Prostate gland (tissue), 2 donors: ENCODE measurements at regions of chr13 and their contacts with region 1.

Region 1: DNA sequence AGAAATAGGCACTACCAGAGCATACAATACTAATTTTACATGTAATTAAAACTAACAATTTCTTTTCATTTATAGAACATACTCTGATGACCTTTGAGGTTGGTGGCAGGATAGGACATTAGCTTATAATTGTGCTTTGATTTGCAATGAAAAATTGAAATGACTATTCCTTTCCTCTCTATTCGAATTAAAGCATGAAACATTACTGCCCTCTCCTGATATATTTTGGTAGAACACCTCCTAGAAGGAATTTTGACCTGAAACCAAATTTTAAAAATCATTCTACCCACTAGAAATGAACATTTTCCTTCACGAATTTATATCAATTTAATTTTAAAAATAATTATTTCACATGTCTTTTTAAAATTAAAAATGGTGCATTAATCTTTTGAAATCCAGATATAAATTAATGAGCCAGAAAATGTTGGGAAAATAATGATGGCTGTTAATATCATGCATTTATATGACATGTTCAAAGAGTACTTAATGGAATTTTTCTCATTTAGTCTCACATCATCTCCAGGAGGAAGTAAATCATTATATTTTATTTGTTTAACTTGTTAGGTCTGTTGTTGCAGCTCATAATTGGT is 556.3 kb upstream of the ARGLU1 start:
- DNase-seq: no peak
- H3K4me3 ChIP-seq: no peak overlapping the region
- H3K27ac ChIP-seq: no peak overlapping the region
- H3K4me1 ChIP-seq: no peaks in the 10 kb centered on the region
- H3K27me3 ChIP-seq: no peaks in the 10 kb centered on the region
- CTCF ChIP-seq: peak in 3 of 4 experiments; percentile 9 to 63 (median 47)
- POLR2A ChIP-seq: no peak

Region 2: DNA sequence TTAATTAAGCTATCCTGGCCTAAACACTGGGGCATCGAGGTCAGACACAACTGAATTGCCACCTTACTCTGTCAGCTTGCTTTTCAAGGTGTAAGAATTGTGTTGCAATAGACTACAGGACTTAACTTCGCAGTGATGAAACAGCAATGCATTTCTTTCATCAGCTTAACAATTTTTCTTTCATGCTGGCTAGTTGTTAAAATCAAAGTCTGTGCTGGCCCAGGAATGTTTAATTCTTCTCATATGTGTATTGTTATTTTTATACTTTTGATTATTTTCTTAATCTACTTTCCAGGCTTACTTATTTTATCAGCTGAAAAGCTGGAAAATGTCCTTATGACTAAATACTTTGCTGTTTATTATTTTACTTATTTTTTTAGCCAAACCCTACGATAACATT is 668.4 kb before region 1 on chr13:
- intact Hi-C with region 1: no loop called
- DNase-seq: no peak
- H3K4me3 ChIP-seq: no peak overlapping the region
- H3K27ac ChIP-seq: no peak overlapping the region
- H3K4me1 ChIP-seq: no peaks in the 10 kb centered on the region
- H3K27me3 ChIP-seq: no peaks in the 10 kb centered on the region
- CTCF ChIP-seq: no peak
- POLR2A ChIP-seq: no peak

Region 3: DNA sequence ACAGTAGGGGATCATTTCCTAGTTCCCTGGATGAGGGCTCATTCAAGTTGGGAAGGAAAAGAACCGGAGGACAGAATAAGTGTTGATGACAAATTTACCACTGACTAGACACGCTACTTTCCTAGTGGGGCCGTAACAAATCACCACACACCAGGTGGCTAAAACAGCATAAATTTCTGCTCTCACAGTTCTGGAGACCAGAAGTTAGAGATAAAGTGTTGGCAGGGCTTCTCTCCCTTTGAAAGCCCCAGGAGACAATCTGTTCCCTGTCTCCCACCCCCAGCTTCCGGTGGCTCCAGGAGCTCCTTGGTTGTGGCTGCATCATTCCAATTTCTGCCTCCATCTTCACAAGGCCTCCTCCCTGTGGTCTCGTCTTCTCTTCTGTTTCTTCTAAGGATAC is 490.9 kb before region 1 on chr13:
- intact Hi-C with region 1: loop called (anchors 10 kb)
- DNase-seq: no peak
- H3K4me3 ChIP-seq: no peak overlapping the region
- H3K27ac ChIP-seq: no peak overlapping the region
- H3K4me1 ChIP-seq: no peaks in the 10 kb centered on the region
- H3K27me3 ChIP-seq: no peaks in the 10 kb centered on the region
- CTCF ChIP-seq: no peak
- POLR2A ChIP-seq: no peak

Region 4: GRCh38 chr13:106796280-106797047 is 327.8 kb before region 1 on chr13:
- intact Hi-C with region 1: no loop called
- DNase-seq: no peak
- H3K4me3 ChIP-seq: no peak overlapping the region
- H3K27ac ChIP-seq: no peak overlapping the region
- H3K4me1 ChIP-seq: no peaks in the 10 kb centered on the region
- H3K27me3 ChIP-seq: no peaks in the 10 kb centered on the region
- CTCF ChIP-seq: no peak
- POLR2A ChIP-seq: no peak

Region 5: DNA sequence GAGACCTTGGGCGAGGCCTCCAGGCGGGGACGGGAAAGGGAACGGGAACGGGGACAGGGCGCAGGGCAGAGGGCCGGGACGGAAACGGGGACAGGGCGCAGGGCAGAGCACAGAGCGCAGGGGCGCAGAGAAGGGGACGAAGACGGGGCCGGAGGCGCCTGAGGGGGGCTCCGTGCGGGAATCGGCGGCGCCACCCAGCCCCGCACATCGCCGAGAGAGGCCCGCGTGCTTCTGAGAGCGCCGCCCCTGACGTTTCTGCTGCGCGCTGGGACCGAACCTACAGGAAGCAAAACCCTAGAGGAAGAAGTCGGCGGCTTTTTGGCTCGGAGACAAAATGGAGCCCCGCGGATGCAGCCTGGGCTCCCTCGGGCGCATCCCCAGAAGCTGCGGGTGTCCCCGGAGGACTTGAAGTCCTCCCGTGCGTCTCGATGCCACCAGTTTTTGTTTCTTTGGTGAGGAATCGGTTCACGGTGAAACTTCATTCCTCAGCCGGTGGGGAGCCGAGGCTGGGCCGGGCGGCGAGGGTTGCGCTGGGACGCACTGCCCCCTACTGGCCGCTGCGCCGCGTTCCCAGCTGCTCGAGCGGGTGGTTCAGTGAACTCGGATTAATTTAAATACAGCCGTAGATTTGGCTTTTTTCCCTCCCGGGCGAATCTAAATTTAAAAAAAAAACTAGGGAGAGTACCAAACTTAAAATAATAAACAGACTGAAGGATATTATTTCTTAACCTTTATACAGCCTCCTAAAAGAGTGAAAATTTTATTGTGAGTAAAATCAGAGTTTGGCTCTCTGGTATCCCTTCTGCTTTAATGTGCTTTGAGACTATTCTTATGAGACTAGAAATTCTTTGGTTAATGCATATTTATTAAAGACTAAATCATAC is 206.3 kb before region 1 on chr13:
- intact Hi-C with region 1: loop called (anchors 10 kb)
- DNase-seq: peak; percentile 59
- H3K4me3 ChIP-seq: peak overlapping the region; percentile 42
- H3K27ac ChIP-seq: peak overlapping the region; percentile 60 to 74
- H3K4me1 ChIP-seq: no peaks in the 10 kb centered on the region
- H3K27me3 ChIP-seq: no peaks in the 10 kb centered on the region
- CTCF ChIP-seq: peak; percentile 77 to 89 (median 87)
- POLR2A ChIP-seq: no peak

Region 6: DNA sequence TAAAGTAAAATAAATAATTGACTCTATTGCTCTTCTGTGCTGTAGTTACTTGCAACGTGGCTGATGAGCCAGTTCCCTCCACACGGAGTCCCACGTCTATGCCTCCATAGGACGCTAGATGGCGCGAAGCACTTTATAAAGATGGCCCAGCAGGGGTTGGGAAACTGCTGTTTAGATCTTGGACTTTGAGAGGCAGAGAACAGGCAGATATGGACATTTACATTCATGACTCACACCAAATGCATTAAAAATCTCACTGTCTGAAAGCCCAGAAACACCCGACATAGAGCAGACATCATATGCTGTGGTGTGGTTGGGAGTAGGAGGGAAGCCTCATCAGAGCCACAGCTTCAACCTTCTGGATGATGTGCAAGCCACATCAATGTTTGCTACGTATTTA is 86.8 kb after region 1 on chr13:
- intact Hi-C with region 1: no loop called
- DNase-seq: peak; percentile 49
- H3K4me3 ChIP-seq: no peak overlapping the region
- H3K27ac ChIP-seq: no peak overlapping the region
- H3K4me1 ChIP-seq: no peaks in the 10 kb centered on the region
- H3K27me3 ChIP-seq: no peaks in the 10 kb centered on the region
- CTCF ChIP-seq: peak; percentile 53 to 70 (median 64)
- POLR2A ChIP-seq: no peak